CD8-positive, alpha-beta T cell (primary cell): ENCODE measurements at regions of chr17 and their contacts with region 1.

Region 1: DNA sequence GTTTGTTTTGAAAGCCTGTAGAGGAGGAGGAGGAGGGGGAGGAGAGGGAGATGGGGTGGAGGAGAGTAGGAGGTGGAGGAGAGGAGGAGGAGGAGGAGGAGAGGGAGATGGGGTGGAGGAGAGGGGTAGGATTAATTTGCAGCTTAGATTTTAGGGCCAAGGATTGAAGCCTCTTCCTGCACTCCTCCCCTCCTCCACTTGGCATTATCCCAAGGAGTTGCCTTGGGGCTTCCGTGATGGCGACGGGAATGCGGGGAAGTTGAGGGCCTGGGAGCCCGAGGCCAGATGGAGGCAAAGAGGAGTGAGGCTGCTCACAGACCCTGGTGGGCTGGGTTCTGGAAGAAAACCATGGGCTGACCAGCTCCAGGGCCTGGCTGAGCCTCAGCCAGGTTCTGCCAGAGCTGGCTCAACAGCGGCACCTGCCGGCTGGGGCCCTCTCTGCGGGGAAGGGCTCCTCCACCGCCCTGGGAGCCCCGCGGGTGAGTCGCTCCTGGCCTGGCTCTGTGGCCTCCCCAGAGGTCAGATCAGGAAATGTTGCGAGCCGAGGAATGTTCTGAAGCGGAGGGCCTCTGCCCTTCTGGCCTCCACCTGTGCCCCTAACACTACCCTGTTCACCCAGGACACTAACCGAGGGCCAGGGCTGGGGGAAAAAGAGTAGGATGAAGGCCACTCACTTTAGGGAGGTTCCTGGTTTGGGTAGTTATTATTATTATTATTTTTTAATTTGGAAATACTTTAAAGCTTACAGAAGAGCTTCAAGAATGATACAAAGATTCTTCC is 23.9 kb upstream of the FMNL1 start:
- DNase-seq: peak; percentile 75 to 93 (median 86)
- ATAC-seq: peak; percentile 100
- H3K4me3 ChIP-seq: no peak overlapping the region
- H3K4me3 Mint-ChIP-seq: no peak overlapping the region
- H3K27ac ChIP-seq: no peak overlapping the region
- H3K27ac Mint-ChIP-seq: no peak overlapping the region
- H3K4me1 ChIP-seq: peaks cover 7% of the 10 kb centered on the region
- H3K4me1 Mint-ChIP-seq: peaks cover 4% of the 10 kb centered on the region
- H3K27me3 ChIP-seq: no peaks in the 10 kb centered on the region
- H3K27me3 Mint-ChIP-seq: no peaks in the 10 kb centered on the region
- CTCF ChIP-seq: peak; percentile 85

Region 2: DNA sequence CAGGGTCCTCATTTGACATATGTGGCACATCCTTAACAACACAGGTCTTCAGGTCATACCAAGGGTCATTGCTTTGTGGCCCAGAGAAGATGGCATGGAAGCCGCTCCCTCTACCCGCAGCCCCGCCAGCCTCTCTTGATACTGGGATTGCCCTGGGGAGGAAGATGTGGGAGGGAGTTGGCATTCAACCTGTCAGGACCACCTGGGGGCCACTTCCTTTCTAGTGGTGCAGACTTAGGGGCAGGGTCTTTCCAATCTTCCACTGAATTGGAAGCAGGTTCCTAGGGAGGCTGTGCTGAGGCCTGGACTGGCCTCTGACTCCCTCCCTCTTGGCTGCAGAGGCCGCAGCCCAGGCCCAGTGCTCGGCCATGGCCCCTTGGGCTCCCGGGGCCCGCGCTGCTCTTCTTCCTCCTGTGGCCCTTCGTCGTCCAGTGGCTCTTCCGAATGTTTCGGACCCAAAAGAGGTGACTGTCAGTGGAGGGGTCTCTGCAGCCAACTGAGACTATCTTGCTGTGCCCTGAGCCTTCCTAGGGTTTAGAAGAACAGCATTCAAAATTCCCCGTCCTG is 54.6 kb before region 1 on chr17:
- CTCF ChIA-PET with region 1: interaction called, 277 read pairs
- POLR2A ChIA-PET with region 1: interaction called, 37 read pairs
- intact Hi-C with region 1: no loop called
- DNase-seq: no peak
- ATAC-seq: no peak
- H3K4me3 ChIP-seq: no peak overlapping the region
- H3K4me3 Mint-ChIP-seq: peak overlapping the region; percentile 76
- H3K27ac ChIP-seq: no peak overlapping the region
- H3K27ac Mint-ChIP-seq: peak overlapping the region; percentile 62
- H3K4me1 ChIP-seq: peaks cover 28% of the 10 kb centered on the region
- H3K4me1 Mint-ChIP-seq: peaks cover 38% of the 10 kb centered on the region
- H3K27me3 ChIP-seq: no peaks in the 10 kb centered on the region
- H3K27me3 Mint-ChIP-seq: no peaks in the 10 kb centered on the region
- CTCF ChIP-seq: no peak

Region 3: DNA sequence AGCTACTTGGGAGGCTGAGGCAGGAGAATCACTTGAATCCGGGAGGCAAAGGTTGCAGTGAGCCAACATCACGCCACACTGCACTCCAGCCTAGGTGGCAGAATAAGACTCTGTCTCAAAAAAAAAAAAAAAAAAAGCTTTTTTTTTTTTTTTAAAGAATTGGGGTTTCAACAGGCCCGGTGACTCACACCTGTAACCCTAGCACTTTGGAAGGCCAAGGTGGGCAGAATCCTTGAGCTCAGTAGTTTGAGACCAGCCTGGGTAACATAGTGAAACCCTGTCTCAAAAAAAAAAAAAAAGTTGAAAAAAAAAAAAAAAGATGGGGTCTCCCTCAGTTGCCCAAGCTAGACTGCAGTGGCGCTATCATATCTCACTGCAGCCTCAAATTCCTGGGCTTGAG is 42.7 kb before region 1 on chr17:
- CTCF ChIA-PET with region 1: interaction called, 136 read pairs
- POLR2A ChIA-PET with region 1: interaction called, 37 read pairs
- intact Hi-C with region 1: loop called in 1 of 2 experiments (anchors 1 kb)
- DNase-seq: peak in 1 of 9 experiments; percentile 38
- ATAC-seq: peak; percentile 21
- H3K4me3 ChIP-seq: no peak overlapping the region
- H3K4me3 Mint-ChIP-seq: no peak overlapping the region
- H3K27ac ChIP-seq: peak overlapping the region in 1 of 2 experiments; percentile 33
- H3K27ac Mint-ChIP-seq: no peak overlapping the region
- H3K4me1 ChIP-seq: peaks cover 47% of the 10 kb centered on the region
- H3K4me1 Mint-ChIP-seq: peaks cover 54% of the 10 kb centered on the region
- H3K27me3 ChIP-seq: no peaks in the 10 kb centered on the region
- H3K27me3 Mint-ChIP-seq: no peaks in the 10 kb centered on the region
- CTCF ChIP-seq: no peak

Region 4: DNA sequence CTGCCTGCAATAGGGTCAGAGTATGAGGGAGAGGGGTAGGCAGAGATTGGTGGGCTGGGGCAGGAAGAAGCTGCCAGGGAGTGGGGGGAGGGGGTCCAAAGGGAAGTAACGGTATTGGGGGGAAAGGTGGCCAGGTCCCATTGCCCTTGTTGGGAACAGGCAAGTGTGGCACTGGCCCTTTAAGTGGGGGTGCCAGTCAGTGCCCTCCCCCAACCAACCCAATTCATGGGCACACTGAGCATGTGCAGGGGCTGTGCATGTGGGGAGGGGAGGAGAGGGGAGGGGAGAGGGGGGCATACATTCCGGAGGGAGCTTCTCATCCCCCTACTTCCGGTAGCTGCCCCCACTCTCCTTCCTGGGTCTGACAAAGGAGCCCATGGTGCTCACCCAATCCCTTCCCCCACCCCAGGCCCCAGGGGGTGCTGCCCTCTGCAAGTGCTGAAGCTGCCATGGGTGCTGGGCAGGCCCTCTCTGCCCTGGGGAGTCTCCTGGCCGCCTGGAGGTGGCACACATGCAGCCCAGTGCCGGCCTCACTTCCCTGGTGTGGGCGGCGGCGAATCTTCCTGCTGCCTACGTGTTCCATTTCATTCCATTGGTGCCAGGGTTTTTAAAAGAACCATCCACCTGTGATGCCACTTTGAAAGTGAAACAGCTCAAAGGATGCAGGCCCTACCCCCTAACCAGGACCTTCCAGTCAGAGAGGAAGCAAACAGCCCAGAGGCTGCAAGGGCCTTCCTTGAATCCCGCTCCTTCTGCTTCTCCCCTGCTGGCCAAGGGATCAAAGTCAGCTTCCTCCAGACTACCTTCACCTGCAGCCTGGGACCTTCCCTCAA is 25.1 kb before region 1 on chr17:
- CTCF ChIA-PET with region 1: interaction called, 31 read pairs
- POLR2A ChIA-PET with region 1: interaction called, 3 read pairs
- intact Hi-C with region 1: no loop called
- DNase-seq: peak in 8 of 9 experiments; percentile 39 to 76 (median 52)
- ATAC-seq: peak; percentile 81
- H3K4me3 ChIP-seq: peak overlapping the region; percentile 35 to 65
- H3K4me3 Mint-ChIP-seq: peak overlapping the region; percentile 80
- H3K27ac ChIP-seq: peak overlapping the region; percentile 31 to 66
- H3K27ac Mint-ChIP-seq: peak overlapping the region; percentile 91
- H3K4me1 ChIP-seq: peaks cover 26% of the 10 kb centered on the region
- H3K4me1 Mint-ChIP-seq: peaks cover 23% of the 10 kb centered on the region
- H3K27me3 ChIP-seq: no peaks in the 10 kb centered on the region
- H3K27me3 Mint-ChIP-seq: no peaks in the 10 kb centered on the region
- CTCF ChIP-seq: no peak

Region 5: DNA sequence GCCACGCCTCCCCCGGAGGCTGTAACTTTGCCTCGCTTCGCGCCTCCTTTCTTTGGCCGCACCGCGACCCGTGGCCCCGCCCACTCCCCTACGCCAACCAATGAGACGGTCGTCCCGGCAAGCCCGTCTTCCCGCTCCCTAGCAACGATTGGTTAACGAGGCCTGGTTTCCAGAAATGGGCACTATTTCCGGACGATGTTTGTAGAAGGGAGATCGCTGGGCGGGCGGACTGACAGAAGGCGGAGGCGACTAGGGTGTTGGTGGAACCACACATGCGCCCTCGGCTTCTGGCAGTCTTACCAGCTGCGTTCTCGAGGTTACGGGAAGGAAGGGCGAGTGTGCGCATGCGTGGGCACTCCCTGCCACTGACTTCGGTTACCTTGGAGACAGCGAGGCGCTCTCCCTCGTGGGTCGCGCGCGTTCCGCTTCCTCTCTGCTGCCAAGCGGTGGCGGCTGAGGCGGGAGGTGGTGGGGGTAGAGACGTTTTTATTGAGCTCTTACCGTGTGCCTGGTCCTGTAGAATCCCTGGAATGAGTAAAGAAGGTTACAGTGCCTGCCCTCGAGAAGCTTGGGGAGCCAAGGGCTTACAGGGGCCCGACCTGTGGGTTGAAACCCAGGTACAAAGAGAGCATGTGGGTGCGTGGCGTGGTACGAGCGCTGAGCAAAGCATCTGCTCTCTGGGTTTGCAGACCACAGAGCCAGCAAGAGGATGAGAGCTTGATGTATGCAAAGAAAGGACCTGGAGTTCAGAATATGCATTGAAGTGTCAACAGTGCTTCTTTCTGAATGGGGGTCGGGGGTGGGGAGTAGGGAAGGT is 119.6 kb after region 1 on chr17:
- CTCF ChIA-PET with region 1: no interaction called
- POLR2A ChIA-PET with region 1: no interaction called
- intact Hi-C with region 1: no loop called
- DNase-seq: peak; percentile 99 to 100 (median 100)
- ATAC-seq: peak; percentile 81
- H3K4me3 ChIP-seq: peak overlapping the region; percentile 55 to 81
- H3K4me3 Mint-ChIP-seq: peak overlapping the region; percentile 95
- H3K27ac ChIP-seq: peak overlapping the region; percentile 75 to 81
- H3K27ac Mint-ChIP-seq: peak overlapping the region; percentile 94
- H3K4me1 ChIP-seq: peaks cover 78% of the 10 kb centered on the region
- H3K4me1 Mint-ChIP-seq: peaks cover 80% of the 10 kb centered on the region
- H3K27me3 ChIP-seq: no peaks in the 10 kb centered on the region
- H3K27me3 Mint-ChIP-seq: no peaks in the 10 kb centered on the region
- CTCF ChIP-seq: no peak